Left ventricle myocardium inferior (tissue), 1 donor: ENCODE measurements at regions of chr21 and their contacts with region 1.

Region 1: DNA sequence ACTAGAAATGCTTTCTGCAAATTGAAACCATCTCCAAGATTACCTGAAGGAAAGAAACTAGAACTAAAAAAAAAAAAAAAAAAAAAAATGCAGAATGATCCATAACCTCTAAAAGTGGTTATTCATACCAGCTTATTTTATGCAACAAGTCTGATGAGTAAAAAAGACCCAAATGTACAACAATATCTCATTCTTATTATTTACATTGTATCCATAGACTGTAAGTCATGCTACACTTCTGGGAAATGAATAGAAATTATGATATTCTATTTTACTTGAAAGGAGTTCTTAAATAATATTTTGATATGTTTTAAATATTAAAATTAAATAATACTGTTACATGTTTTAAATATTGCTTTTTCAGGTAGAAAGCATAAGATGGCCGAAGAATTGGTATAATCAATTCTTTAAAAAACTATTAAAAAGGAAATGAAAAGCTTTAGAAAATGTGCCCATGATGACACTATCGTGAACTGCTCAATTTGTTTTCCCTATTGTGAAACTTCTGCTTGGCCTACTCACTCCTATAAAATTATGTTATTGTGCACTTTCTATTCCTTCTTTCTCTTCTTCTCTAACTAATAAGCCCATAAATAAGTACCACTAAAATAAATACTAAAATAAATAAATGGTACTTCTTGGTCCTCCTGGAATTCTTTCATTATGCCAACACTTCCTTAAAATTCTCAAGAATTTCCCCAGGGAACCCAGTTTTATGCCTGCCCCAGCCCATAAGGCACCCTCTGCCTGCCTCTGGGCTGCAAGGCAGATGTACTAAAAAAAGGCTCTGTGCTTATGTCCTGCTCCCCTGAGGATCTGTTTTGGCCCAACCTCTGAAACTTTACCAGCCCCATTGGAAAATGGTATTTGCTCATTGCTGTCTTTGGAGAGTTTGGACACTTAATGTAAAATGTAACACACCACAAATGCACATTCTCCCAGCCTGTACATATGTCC is 18.1 kb downstream of the SAMSN1 start:
- DNase-seq: no peak
- H3K4me3 ChIP-seq: no peak overlapping the region
- H3K27ac ChIP-seq: peak overlapping the region; percentile 10
- H3K4me1 ChIP-seq: peaks cover 5% of the 10 kb centered on the region
- H3K27me3 ChIP-seq: no peaks in the 10 kb centered on the region
- CTCF ChIP-seq: no peak

Region 2: GRCh38 chr21:14545906-14546480 is 18.0 kb after region 1 on chr21 and contains the start of gene SAMSN1:
- intact Hi-C with region 1: loop called (anchors 2 kb)
- DNase-seq: no peak
- H3K4me3 ChIP-seq: peak within 1 kb of the TSS; percentile 24
- H3K27ac ChIP-seq: peak within 1 kb of the TSS; percentile 11
- H3K4me1 ChIP-seq: no peaks in the 10 kb centered on the region
- H3K27me3 ChIP-seq: no peaks in the 10 kb centered on the region
- CTCF ChIP-seq: no peak
- total RNA-seq, gene SAMSN1: 1.0 TPM

Region 3: GRCh38 chr21:14630556-14631069 is 102.6 kb after region 1 on chr21:
- intact Hi-C with region 1: no loop called
- DNase-seq: no peak
- H3K4me3 ChIP-seq: no peak overlapping the region
- H3K27ac ChIP-seq: no peak overlapping the region
- H3K4me1 ChIP-seq: no peaks in the 10 kb centered on the region
- H3K27me3 ChIP-seq: no peaks in the 10 kb centered on the region
- CTCF ChIP-seq: no peak

Region 4: DNA sequence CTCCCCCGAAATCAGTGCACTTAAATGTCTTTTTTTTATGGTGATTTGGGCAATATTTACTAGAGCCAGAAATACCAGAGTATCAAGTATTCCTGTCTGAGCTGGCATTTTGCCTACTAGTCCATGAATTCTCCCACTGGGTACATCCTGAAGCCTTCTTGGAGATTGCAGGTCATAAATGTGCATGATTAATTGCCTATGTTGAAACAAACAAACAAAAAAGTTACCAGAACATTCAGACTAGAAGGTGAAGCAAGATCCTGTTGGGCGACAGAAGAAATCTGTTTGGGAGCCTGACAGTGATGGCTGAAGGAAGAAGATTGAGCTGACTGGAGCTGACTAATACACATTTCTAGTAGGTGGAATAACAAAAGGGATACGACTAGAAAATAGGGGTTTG is 664.3 kb after region 1 on chr21:
- intact Hi-C with region 1: no loop called
- DNase-seq: no peak
- H3K4me3 ChIP-seq: no peak overlapping the region
- H3K27ac ChIP-seq: no peak overlapping the region
- H3K4me1 ChIP-seq: no peaks in the 10 kb centered on the region
- H3K27me3 ChIP-seq: no peaks in the 10 kb centered on the region
- CTCF ChIP-seq: no peak

Region 5: GRCh38 chr21:15379776-15380175 is 851.8 kb after region 1 on chr21:
- intact Hi-C with region 1: no loop called
- DNase-seq: no peak
- H3K4me3 ChIP-seq: no peak overlapping the region
- H3K27ac ChIP-seq: no peak overlapping the region
- H3K4me1 ChIP-seq: peaks cover 7% of the 10 kb centered on the region
- H3K27me3 ChIP-seq: no peaks in the 10 kb centered on the region
- CTCF ChIP-seq: no peak